ENCODE measurements at regions of chr9 and their contacts with region 1.

Region 1: DNA sequence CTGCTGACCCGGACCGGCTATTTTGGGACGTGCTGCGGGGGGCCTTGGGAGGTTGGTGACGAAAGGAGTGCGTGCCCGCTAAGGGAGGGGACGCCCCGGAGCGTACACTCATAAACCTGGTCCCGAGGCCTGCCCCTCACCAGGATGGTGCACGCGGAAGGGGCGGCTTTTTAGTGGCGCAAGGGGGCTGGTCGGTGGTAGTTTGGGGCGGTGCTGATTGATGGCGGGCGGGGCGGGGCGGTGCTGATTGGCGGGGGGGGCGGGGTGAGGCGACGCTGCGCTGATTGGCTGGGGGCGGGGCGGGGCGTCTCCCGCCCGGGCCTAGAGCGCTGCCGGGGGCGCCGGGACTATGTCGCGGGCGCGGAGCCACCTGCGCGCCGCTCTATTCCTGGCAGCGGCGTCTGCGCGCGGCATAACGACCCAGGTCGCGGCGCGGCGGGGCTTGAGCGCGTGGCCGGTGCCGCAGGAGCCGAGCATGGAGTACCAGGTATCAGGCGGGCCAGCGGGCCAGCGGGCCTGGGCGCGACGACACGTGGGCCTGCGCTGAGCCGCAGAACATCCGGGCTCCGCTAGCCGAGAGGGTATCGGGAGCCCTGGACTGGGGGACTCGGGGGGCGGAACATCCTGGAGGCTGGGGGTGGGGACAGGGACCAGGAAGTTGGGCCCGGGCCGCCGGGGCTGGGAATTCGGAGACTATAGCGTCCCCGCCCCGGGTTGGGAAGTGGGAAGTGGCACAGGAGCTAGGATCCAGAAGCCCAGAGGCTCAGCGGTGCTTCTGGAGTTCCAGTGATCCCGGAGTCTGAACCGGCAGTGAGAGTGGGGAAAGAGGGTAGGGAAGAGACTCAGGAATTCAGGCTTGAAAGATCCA is at the start of gene FPGS:
- DNase-seq: peak; percentile 79 to 91 (median 85)
- H3K4me3 ChIP-seq: peak within 1 kb of the TSS; percentile 97
- H3K4me3 Mint-ChIP-seq: peak within 1 kb of the TSS; percentile 91 to 98 (median 93)
- H3K27ac ChIP-seq: peak within 1 kb of the TSS; percentile 90
- H3K27ac Mint-ChIP-seq: peak within 1 kb of the TSS; percentile 81 to 100 (median 94)
- H3K4me1 ChIP-seq: peaks cover 20% of the 10 kb centered on the region
- H3K4me1 Mint-ChIP-seq: peaks cover 20 to 46% (median 28%) of the 10 kb centered on the region in 3 donors
- H3K27me3 ChIP-seq: no peaks in the 10 kb centered on the region
- H3K27me3 Mint-ChIP-seq: peaks cover 0 to 1% of the 10 kb centered on the region in 2 donors
- total RNA-seq, gene FPGS: 110 to 111 TPM

Region 2: GRCh38 chr9:127770905-127771569 is 31.8 kb before region 1 on chr9:
- CTCF ChIA-PET with region 1: no interaction called
- POLR2A ChIA-PET with region 1: interaction called, 10 read pairs
- DNase-seq: peak; percentile 85 to 96 (median 90)
- H3K4me3 ChIP-seq: peak overlapping the region; percentile 71
- H3K4me3 Mint-ChIP-seq: peak overlapping the region; percentile 80 to 96 (median 89)
- H3K27ac ChIP-seq: peak overlapping the region; percentile 77
- H3K27ac Mint-ChIP-seq: peak overlapping the region; percentile 86 to 99 (median 98)
- H3K4me1 ChIP-seq: peaks cover 73% of the 10 kb centered on the region
- H3K4me1 Mint-ChIP-seq: peaks cover 61 to 79% (median 75%) of the 10 kb centered on the region in 3 donors
- H3K27me3 ChIP-seq: no peaks in the 10 kb centered on the region
- H3K27me3 Mint-ChIP-seq: no peaks in the 10 kb centered on the region

Region 3: DNA sequence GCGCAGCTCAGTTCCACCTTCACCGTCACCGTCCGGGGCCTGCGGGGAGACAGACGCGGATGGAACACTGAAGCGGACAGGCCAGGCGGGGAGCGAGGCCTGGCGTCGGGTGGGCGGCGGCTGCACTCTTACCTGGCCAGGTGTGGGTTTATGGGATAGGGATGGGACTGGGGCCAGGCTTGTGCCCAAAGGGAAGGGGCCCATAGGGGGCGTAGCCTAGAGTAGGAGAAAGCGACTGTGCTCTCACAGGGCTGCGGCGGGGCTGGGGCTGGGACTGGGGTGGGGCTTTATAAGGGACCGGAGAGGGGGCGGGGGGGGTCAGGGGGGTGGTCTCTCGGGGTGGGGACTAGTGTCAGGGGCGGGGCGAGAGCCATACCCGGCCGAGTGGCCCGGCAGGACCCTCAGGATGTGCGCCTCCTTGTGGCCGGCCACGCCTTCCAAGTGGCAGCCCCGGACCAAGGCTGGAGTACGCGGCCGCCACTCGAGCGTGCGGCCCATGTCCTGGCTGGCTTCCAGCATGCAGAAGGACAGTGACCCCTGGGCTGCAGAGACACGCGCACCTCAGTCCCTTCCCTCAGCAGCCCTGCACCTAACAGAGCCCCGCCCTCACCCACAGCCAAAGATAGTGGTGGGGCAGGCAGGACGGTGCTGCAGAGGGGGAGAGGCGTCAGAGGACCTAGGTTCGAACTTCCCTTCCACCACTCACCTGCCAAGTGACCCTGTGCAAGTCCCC is 22.7 kb after region 1 on chr9:
- CTCF ChIA-PET with region 1: no interaction called
- POLR2A ChIA-PET with region 1: interaction called, 11 read pairs
- DNase-seq: no peak
- H3K4me3 ChIP-seq: no peak overlapping the region
- H3K4me3 Mint-ChIP-seq: no peak overlapping the region
- H3K27ac ChIP-seq: no peak overlapping the region
- H3K27ac Mint-ChIP-seq: peak overlapping the region in 2 of 8 donors; percentile 43 to 65
- H3K4me1 ChIP-seq: no peaks in the 10 kb centered on the region
- H3K4me1 Mint-ChIP-seq: no peaks in the 10 kb centered on the region
- H3K27me3 ChIP-seq: no peaks in the 10 kb centered on the region
- H3K27me3 Mint-ChIP-seq: peaks cover 0 to 2% of the 10 kb centered on the region in 2 donors

Region 4: DNA sequence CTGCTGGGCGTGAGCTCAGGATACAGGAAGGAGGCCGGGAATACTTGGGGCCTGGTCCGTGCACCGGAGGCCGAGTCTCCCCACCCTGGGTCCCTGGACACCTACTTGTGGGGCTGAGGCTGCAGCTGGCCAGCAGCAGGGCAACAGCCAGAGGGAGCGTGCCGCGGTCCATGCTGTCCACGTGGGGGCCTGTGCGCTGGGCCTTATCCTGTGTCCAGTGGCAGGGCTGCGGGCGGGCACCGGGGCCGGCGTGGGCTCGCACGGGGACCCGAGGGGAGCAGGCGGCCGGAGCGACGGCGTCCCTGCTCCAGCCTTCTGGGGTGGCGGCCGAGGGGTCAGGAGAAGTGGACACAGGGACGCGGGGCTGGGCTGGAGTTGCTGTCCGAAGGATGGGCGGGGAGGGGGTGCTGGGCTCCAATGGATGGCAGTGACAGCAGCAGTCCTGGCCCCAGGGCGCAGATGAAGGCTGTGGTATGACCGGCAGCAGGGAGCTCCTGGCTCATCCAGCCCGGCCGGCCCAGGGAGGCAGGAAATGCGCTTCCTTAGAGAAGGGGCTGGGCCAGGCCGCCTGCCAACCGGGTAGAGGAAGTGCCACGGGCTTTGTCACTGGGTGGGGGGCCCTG is 51.5 kb after region 1 on chr9 and contains the start of gene ENG:
- CTCF ChIA-PET with region 1: no interaction called
- POLR2A ChIA-PET with region 1: no interaction called
- DNase-seq: peak in 1 of 5 donors; percentile 14
- H3K4me3 ChIP-seq: peak within 1 kb of the TSS; percentile 72
- H3K4me3 Mint-ChIP-seq: peak within 1 kb of the TSS; percentile 83 to 95 (median 85)
- H3K27ac ChIP-seq: no peak within 1 kb of the TSS
- H3K27ac Mint-ChIP-seq: peak within 1 kb of the TSS; percentile 72 to 96 (median 88)
- H3K4me1 ChIP-seq: peaks cover 25% of the 10 kb centered on the region
- H3K4me1 Mint-ChIP-seq: peaks cover 20 to 43% (median 31%) of the 10 kb centered on the region in 3 donors
- H3K27me3 ChIP-seq: no peaks in the 10 kb centered on the region
- H3K27me3 Mint-ChIP-seq: no peaks in the 10 kb centered on the region
- total RNA-seq, gene ENG: 18.9 to 19.3 TPM